PC-3 (cell line): ENCODE measurements at regions of chr7 and their contacts with region 1.

Region 1: DNA sequence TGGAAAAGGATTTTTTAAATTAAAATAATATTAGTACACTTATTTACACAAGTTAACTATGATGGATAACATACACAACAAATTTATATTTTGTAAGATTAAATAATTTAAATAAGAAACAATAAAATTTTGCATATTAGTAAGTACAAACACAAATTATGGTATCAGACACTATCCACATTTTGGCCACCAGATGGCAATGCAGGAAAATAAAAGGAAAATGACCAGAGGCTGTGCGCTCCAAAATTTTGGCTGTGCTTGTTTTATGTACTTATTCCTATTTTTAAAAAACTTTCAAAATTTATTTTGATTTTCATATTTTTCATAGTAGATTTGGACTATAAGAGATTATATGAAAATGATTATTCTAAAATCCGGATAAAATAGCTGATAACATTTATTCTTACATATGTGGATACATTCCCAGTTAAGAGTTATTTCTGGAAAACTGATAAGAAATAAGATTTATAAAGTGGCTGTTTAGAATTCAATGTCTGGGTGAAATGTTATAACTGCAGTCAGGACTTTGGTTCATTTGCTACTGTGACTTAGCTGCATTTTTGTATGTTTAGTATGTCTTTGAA is 274.7 kb upstream of the HGF start:
- DNase-seq: peak; percentile 66
- ATAC-seq: peak; percentile 45; the same call in 1 of the 2 replicates
- H3K4me3 ChIP-seq: no peak overlapping the region
- H3K27ac ChIP-seq: no peak overlapping the region
- H3K4me1 ChIP-seq: peaks cover 10% of the 10 kb centered on the region
- H3K27me3 ChIP-seq: no peaks in the 10 kb centered on the region
- CTCF ChIP-seq: peak; percentile 62

Region 2: GRCh38 chr7:82105463-82105862 is 60.9 kb after region 1 on chr7:
- CTCF ChIA-PET with region 1: no interaction called
- POLR2A ChIA-PET with region 1: no interaction called
- intact Hi-C with region 1: no loop called
- DNase-seq: peak; percentile 80
- ATAC-seq: peak; percentile 82
- H3K4me3 ChIP-seq: no peak overlapping the region
- H3K27ac ChIP-seq: peak overlapping the region; percentile 75
- H3K4me1 ChIP-seq: peaks cover 21% of the 10 kb centered on the region
- H3K27me3 ChIP-seq: no peaks in the 10 kb centered on the region
- CTCF ChIP-seq: no peak

Region 3: GRCh38 chr7:82172017-82172416 is 127.4 kb after region 1 on chr7:
- CTCF ChIA-PET with region 1: no interaction called
- POLR2A ChIA-PET with region 1: no interaction called
- intact Hi-C with region 1: loop called (anchors 2 kb)
- DNase-seq: peak; percentile 32
- ATAC-seq: peak; percentile 70
- H3K4me3 ChIP-seq: no peak overlapping the region
- H3K27ac ChIP-seq: no peak overlapping the region
- H3K4me1 ChIP-seq: no peaks in the 10 kb centered on the region
- H3K27me3 ChIP-seq: peaks cover 65% of the 10 kb centered on the region
- CTCF ChIP-seq: peak; percentile 63

Region 4: DNA sequence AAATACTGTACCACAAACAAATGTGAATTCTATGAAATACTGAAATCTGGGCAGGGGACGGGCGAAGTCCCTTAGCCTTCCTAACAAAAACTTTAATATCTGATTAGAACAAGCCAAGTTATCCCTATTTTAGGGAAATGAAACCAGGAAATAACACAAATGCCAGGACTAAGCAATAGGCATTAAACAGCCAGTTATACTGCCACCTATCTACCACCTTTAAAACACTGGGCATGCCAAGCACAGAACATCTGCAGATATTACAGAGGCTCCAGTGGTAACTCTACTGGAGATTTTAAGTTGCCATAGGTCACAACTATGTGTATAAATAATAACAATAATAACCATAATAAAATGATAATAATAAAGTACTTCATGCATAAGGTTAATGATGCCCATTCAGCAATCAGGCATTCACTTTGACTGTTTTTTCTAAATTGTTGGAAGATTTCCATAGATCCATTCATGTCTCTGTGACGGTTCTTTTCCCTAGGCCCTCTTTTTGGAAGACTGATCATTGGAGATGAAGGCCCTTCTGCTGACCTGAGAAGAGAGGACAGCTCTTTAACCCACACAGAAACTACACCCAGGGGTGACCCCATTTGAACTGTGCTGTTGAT is 203.3 kb after region 1 on chr7:
- CTCF ChIA-PET with region 1: no interaction called
- POLR2A ChIA-PET with region 1: no interaction called
- intact Hi-C with region 1: loop called (anchors 5 kb)
- DNase-seq: peak; percentile 35
- ATAC-seq: peak; percentile 93
- H3K4me3 ChIP-seq: no peak overlapping the region
- H3K27ac ChIP-seq: no peak overlapping the region
- H3K4me1 ChIP-seq: no peaks in the 10 kb centered on the region
- H3K27me3 ChIP-seq: peaks cover 23% of the 10 kb centered on the region
- CTCF ChIP-seq: peak; percentile 69

Region 5: GRCh38 chr7:82481499-82482097 is 437.0 kb after region 1 on chr7:
- CTCF ChIA-PET with region 1: no interaction called
- POLR2A ChIA-PET with region 1: no interaction called
- intact Hi-C with region 1: loop called (anchors 2 kb)
- DNase-seq: peak; percentile 43
- ATAC-seq: no peak
- H3K4me3 ChIP-seq: no peak overlapping the region
- H3K27ac ChIP-seq: no peak overlapping the region
- H3K4me1 ChIP-seq: no peaks in the 10 kb centered on the region
- H3K27me3 ChIP-seq: peaks cover 7% of the 10 kb centered on the region
- CTCF ChIP-seq: peak; percentile 69

Region 6: GRCh38 chr7:82605247-82605872 is 560.8 kb after region 1 on chr7:
- CTCF ChIA-PET with region 1: no interaction called
- POLR2A ChIA-PET with region 1: no interaction called
- intact Hi-C with region 1: loop called (anchors 2 kb)
- DNase-seq: peak; percentile 59
- ATAC-seq: no peak
- H3K4me3 ChIP-seq: no peak overlapping the region
- H3K27ac ChIP-seq: no peak overlapping the region
- H3K4me1 ChIP-seq: no peaks in the 10 kb centered on the region
- H3K27me3 ChIP-seq: no peaks in the 10 kb centered on the region; the same call in 1 of the 2 replicates
- CTCF ChIP-seq: peak; percentile 82